ENCODE measurements at regions of chr17 and their contacts with region 1.

Region 1: DNA sequence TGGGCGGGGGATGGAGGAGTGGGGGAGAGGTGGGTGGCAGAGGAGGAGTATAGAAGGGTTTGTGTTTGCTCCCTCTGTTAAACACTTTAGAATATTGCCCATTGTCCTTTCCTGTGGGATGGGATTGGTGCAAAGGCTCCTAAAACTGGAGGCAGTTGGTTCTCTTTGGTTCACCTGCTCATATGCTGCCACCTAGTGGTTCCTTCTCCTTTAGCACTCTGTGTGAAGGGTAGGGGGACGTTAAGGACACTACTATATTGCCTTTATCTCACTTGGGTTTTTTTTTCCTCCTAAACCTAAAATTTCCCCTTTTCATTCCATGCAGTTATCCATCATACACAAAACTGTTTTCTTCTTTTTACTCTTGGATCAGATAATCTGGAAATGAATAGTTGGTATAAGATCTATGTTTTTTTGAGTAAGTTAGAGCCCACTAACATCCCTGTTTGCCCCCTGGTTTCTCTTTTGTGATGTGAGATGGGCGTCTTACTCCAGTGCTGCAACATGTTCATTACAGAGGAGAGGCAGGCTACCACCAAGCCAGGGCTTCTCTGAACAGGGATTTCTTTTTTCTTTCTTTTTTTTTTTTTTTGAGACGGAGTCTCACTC is 23.8 kb downstream of the SNX11 start:
- DNase-seq: peak; percentile 72
- H3K4me3 ChIP-seq: no peak overlapping the region
- H3K27ac ChIP-seq: no peak overlapping the region
- H3K4me1 ChIP-seq: no peaks in the 10 kb centered on the region
- H3K27me3 ChIP-seq: no peaks in the 10 kb centered on the region
- CTCF ChIP-seq: peak; percentile 38 to 87 (median 82)
- POLR2A ChIP-seq: no peak

Region 2: GRCh38 chr17:48074315-48075081 is 56.8 kb before region 1 on chr17:
- intact Hi-C with region 1: loop called (anchors 5 kb)
- DNase-seq: peak; percentile 79
- H3K4me3 ChIP-seq: no peak overlapping the region
- H3K27ac ChIP-seq: no peak overlapping the region
- H3K4me1 ChIP-seq: no peaks in the 10 kb centered on the region
- H3K27me3 ChIP-seq: no peaks in the 10 kb centered on the region
- CTCF ChIP-seq: peak; percentile 37 to 94 (median 88)
- POLR2A ChIP-seq: no peak

Measured in prostate gland (tissue), 2 donors.